Activated B cell treated with CpG ODN at 0.5 μM for 24 hours (primary cell): ENCODE measurements at regions of chr14 and their contacts with region 1.

Region 1: DNA sequence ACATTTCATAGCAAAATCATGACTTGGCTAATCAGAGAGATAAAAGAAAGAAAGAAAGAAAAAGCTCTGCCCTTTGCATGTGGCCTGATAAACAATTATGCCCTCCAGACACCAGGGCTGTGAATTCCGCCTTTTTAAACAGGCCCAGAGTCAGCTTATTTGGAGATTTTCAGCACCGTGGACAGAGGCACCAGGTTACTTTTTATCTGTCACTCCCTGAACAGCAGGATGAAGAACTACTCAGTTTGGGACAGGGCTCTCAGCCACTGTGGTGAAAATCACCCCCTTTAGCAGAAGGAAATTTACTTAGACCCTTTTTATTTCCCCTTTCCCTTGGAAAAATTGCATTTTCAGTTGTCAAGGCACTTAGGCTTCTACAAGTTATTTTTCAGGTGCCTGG is 359.9 kb downstream of the NRXN3 start:
- DNase-seq: no peak
- ATAC-seq: no peak
- H3K4me3 Mint-ChIP-seq: no peak overlapping the region
- H3K27ac Mint-ChIP-seq: no peak overlapping the region
- H3K4me1 Mint-ChIP-seq: no peaks in the 10 kb centered on the region
- H3K27me3 Mint-ChIP-seq: no peaks in the 10 kb centered on the region
- CTCF ChIP-seq: no peak

Region 2: DNA sequence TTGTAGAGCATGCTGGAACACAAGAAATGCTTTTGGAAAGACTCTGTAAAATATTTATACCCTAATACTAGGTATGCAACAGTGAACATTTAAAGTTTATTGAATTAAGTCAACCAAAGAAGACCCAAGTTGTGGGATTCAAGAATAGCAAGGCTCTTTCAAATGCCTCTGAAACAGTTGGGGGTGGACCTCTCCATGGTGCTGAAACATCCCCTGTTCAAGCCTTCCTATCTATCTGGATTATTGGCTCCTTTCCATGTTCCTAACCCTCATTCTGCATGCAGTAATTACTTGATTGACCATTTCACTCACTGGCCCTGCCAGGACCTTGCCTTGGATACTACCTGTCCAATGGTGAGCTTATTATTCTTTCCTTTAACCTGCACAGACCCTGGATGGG is 10.2 kb before region 1 on chr14:
- CTCF ChIA-PET with region 1: no interaction called
- POLR2A ChIA-PET with region 1: no interaction called
- intact Hi-C with region 1: loop called (anchors 1 kb)
- DNase-seq: no peak
- ATAC-seq: no peak
- H3K4me3 Mint-ChIP-seq: no peak overlapping the region
- H3K27ac Mint-ChIP-seq: no peak overlapping the region
- H3K4me1 Mint-ChIP-seq: no peaks in the 10 kb centered on the region
- H3K27me3 Mint-ChIP-seq: no peaks in the 10 kb centered on the region
- CTCF ChIP-seq: no peak